ENCODE measurements at regions of chr12 and their contacts with region 1.

Region 1: GRCh38 chr12:116015525-116015924 is 262.0 kb downstream of the MED13L start:
- DNase-seq: no peak
- ATAC-seq: peak; percentile 75

Region 2: GRCh38 chr12:115895247-115895646 is 120.3 kb before region 1 on chr12:
- intact Hi-C with region 1: no loop called
- DNase-seq: no peak
- ATAC-seq: no peak

Region 3: DNA sequence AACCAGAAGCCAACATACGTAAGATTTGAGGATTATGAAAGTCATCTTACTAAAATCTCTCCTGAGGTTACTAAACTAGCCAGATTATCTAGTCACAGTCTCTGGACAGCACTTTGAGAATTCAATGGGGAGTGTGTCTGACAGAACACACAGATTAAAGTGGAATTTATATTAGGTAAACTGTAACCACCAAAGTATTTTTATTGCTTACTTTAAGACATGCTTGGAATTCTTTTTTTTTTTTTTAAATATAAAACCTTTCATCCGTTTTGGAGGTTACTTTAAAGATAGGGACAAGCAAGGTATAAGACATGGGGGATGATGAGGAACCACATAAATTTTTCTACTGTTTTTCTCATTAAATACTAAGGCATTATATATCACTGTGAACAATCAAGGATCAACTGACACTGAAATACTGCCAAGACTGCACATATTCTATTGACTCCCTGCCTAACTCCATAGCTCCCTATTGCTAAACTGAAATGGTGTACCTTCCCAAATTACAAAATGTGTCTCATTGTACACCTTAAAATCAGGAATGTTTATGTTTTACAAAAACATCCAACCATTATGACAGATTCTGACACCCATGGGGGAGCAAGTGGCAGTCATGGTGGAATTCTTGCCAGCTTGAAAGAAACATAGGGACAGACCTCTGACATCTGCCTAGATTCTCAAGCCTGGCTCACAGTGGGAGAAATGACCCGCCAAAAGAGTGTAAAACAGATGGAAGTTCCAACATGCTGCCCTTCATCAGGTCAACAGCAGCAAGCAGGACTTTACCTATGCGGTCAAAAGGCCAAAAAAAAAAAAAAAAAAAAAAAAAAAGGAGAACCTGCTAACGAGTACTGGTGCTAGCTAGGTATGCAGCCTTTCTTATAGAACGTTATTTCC is 22.7 kb after region 1 on chr12:
- intact Hi-C with region 1: no loop called
- DNase-seq: no peak
- ATAC-seq: no peak

Region 4: GRCh38 chr12:116236148-116236731 is 220.7 kb after region 1 on chr12:
- intact Hi-C with region 1: loop called (anchors 10 kb)
- DNase-seq: no peak
- ATAC-seq: peak; percentile 82